GM12878 (cell line): ENCODE measurements at regions of chr7 and their contacts with region 1.

Region 1: DNA sequence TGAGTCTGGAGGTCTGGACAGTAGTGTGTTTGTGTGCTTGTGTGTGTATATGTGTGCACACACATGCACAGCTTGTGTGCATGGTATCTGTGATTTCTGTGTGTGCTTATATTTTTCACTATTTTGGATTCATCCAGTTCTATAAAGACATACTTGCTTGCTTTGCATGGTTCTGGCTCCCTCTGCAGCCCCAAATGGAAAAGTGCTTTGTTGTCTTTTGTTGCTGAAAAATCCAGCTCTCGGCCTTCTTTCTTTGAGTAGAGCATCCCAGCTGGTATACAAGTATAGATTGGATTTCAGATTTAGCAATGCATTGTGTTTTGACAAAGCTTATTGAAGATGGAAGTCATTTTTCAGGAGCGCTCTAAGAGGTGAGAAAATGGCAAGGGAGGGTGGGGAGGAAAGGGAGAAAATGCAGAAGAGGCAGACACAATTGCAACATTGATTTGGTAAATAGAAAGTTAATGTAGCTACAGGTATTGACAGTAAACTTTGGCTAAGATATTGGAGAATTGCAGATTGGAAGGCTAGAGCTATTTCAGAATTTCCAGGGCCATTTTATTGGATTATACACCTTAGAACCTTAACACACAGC is 333.9 kb downstream of the AUTS2 start:
- DNase-seq: no peak
- ATAC-seq: peak; percentile 57
- H3K4me3 ChIP-seq: no peak overlapping the region
- H3K27ac ChIP-seq: no peak overlapping the region
- H3K4me1 ChIP-seq: no peaks in the 10 kb centered on the region
- H3K27me3 ChIP-seq: no peaks in the 10 kb centered on the region
- CTCF ChIP-seq: peak; percentile 48 to 65 (median 60)
- EP300 ChIP-seq: no peak
- POLR2A ChIP-seq: no peak
- RAD21 ChIP-seq: peak; percentile 95

Region 2: DNA sequence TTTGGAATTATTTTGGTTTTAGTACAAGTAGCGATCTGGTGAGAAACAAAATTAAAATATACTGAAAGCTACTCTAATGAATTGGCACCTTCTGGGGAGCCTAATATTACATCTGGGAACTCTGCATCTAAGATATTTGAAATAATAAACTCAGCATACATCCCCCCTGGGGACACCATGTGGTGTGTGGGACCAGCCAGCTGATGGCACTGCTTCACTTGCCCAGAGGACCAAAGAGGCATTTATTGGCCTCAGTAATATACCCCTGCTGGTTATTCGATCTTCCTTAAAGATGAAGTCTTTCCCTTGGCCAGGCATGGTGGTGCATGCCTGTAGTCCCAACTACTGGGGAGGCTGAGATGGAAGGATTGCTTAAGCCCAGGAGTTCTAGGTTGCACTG is 529.0 kb before region 1 on chr7:
- CTCF ChIA-PET with region 1: no interaction called
- POLR2A ChIA-PET with region 1: no interaction called
- RAD21 ChIA-PET with region 1: no interaction called
- SMC1A ChIA-PET with region 1: no interaction called
- in situ Hi-C with region 1: no loop called
- intact Hi-C with region 1: loop called (anchors 1 kb)
- DNase-seq: no peak
- ATAC-seq: peak; percentile 95
- H3K4me3 ChIP-seq: no peak overlapping the region
- H3K27ac ChIP-seq: no peak overlapping the region
- H3K4me1 ChIP-seq: no peaks in the 10 kb centered on the region
- H3K27me3 ChIP-seq: no peaks in the 10 kb centered on the region
- CTCF ChIP-seq: peak; percentile 39 to 47 (median 43); a peak in 5 of 6 replicates
- EP300 ChIP-seq: no peak
- POLR2A ChIP-seq: no peak
- RAD21 ChIP-seq: peak; percentile 74

Region 3: DNA sequence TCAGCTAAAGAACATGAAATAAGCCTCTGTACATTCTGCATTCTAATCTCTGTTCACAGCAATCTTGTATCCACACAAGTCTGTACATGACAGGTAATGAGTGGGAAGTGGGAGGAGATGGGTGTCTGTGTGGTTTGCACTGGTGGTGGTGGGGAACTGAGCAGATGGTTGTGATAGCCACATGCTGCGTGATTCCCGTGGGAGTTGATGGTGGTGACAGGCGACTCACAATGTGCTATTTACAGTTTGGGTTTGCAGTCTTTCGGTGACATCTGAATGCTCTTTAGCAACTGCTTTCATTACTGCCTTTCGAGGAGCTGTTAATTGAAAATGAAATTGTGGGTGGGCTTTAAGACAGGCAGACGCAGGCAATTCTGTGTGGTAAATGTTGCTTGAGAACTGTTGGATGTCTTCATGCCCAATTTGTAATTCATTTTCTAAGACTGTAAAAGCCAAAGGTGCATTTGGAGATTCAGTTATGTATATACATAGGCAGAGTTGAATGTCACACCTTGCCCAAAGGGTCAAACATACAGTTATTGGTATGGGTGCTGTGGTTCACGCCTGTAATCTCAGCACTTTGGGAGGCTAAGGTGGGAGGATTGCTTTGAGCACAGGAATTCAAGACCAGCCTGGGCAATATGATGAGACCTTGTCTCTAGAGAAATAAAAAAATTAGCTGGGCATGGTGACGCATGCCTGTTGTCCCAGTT is 25.7 kb before region 1 on chr7:
- CTCF ChIA-PET with region 1: interaction called, 5 read pairs
- POLR2A ChIA-PET with region 1: no interaction called
- RAD21 ChIA-PET with region 1: no interaction called
- SMC1A ChIA-PET with region 1: interaction called, 15 read pairs
- in situ Hi-C with region 1: no loop called
- intact Hi-C with region 1: no loop called
- DNase-seq: peak; percentile 97
- ATAC-seq: peak; percentile 90
- H3K4me3 ChIP-seq: no peak overlapping the region
- H3K27ac ChIP-seq: peak overlapping the region; percentile 88
- H3K4me1 ChIP-seq: peaks cover 22% of the 10 kb centered on the region
- H3K27me3 ChIP-seq: no peaks in the 10 kb centered on the region
- CTCF ChIP-seq: no peak
- EP300 ChIP-seq: peak; percentile 94 to 96
- POLR2A ChIP-seq: no peak
- RAD21 ChIP-seq: no peak

Region 4: GRCh38 chr7:69953136-69954067 is 21.3 kb after region 1 on chr7:
- CTCF ChIA-PET with region 1: interaction called, 3 read pairs
- POLR2A ChIA-PET with region 1: no interaction called
- RAD21 ChIA-PET with region 1: interaction called, 6 read pairs
- SMC1A ChIA-PET with region 1: interaction called, 10 read pairs
- in situ Hi-C with region 1: no loop called
- intact Hi-C with region 1: no loop called
- DNase-seq: no peak
- ATAC-seq: peak; percentile 81
- H3K4me3 ChIP-seq: peak overlapping the region; percentile 3; the same call in 1 of the 2 replicates
- H3K27ac ChIP-seq: peak overlapping the region; percentile 57
- H3K4me1 ChIP-seq: peaks cover 16% of the 10 kb centered on the region
- H3K27me3 ChIP-seq: no peaks in the 10 kb centered on the region
- CTCF ChIP-seq: no peak
- EP300 ChIP-seq: no peak
- POLR2A ChIP-seq: no peak
- RAD21 ChIP-seq: no peak

Region 5: GRCh38 chr7:69992938-69993337 is 60.8 kb after region 1 on chr7:
- CTCF ChIA-PET with region 1: no interaction called
- POLR2A ChIA-PET with region 1: no interaction called
- RAD21 ChIA-PET with region 1: no interaction called
- SMC1A ChIA-PET with region 1: no interaction called
- in situ Hi-C with region 1: no loop called
- intact Hi-C with region 1: no loop called
- DNase-seq: no peak
- ATAC-seq: peak; percentile 88
- H3K4me3 ChIP-seq: no peak overlapping the region
- H3K27ac ChIP-seq: no peak overlapping the region
- H3K4me1 ChIP-seq: peaks cover 7% of the 10 kb centered on the region
- H3K27me3 ChIP-seq: no peaks in the 10 kb centered on the region
- CTCF ChIP-seq: no peak
- EP300 ChIP-seq: no peak
- POLR2A ChIP-seq: no peak
- RAD21 ChIP-seq: no peak

Region 6: DNA sequence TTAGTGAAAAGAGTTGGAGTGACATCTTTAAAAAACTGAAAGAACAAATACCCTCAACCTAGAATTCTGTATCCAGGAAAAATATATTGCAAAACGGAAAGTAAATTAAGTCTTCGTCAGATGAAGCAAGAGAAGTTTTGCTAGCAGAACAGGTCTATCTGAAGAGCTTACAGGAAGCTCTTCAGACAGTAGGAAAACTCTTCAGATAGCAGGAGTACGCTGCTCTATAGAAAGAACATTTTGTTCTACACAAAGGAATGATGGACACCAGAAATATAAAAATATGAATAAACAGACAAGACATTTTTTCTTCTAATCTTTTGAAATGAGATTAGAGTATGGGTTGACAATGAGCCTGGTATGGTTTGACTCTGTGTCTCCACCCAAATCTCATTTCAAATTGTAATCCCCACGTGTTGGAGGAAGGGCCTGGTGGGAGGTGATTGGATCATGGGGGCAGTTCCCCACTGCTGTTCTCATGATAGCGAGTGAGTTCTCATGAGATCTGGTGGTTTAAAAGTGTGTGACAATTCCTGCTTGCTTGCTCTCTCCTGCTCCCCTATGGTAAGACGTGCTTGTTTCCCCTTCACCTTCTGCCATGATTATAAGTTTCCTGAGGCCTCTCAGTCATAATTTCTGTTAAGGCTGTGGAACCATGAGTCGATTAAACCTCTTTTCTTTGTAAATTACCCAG is 233.5 kb after region 1 on chr7:
- CTCF ChIA-PET with region 1: interaction called, 4 read pairs
- POLR2A ChIA-PET with region 1: no interaction called
- RAD21 ChIA-PET with region 1: no interaction called
- SMC1A ChIA-PET with region 1: interaction called, 8 read pairs
- in situ Hi-C with region 1: no loop called
- intact Hi-C with region 1: loop called (anchors 10 kb)
- DNase-seq: no peak
- ATAC-seq: no peak
- H3K4me3 ChIP-seq: no peak overlapping the region
- H3K27ac ChIP-seq: no peak overlapping the region
- H3K4me1 ChIP-seq: no peaks in the 10 kb centered on the region
- H3K27me3 ChIP-seq: no peaks in the 10 kb centered on the region
- CTCF ChIP-seq: no peak
- EP300 ChIP-seq: no peak
- POLR2A ChIP-seq: no peak
- RAD21 ChIP-seq: no peak